ENCODE measurements at regions of chrX and their contacts with region 1.

Region 1: DNA sequence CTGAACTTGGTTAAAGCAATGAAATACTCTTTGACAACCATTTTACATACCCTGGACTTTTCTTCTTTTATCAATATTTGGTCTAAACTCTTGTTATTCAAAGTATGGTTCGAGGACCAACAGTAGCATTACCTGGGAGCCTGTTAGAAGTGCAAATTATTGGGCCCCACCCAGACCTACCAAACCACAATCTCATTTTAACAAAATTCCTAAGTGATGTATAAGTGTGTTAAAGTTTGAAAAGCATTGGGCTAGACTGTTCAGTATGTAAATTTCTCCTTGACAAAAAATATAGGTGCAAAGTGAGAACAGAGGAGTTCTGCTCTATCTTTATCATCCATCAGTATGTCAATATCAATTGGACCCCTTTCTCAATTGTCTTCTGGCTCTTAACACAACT is 67.1 kb downstream of the PGRMC1 start:
- DNase-seq: no peak
- H3K4me3 ChIP-seq: no peak overlapping the region
- H3K27ac ChIP-seq: no peak overlapping the region
- H3K4me1 ChIP-seq: no peaks in the 10 kb centered on the region
- H3K27me3 ChIP-seq: peaks cover 2% of the 10 kb centered on the region
- CTCF ChIP-seq: no peak

Region 2: DNA sequence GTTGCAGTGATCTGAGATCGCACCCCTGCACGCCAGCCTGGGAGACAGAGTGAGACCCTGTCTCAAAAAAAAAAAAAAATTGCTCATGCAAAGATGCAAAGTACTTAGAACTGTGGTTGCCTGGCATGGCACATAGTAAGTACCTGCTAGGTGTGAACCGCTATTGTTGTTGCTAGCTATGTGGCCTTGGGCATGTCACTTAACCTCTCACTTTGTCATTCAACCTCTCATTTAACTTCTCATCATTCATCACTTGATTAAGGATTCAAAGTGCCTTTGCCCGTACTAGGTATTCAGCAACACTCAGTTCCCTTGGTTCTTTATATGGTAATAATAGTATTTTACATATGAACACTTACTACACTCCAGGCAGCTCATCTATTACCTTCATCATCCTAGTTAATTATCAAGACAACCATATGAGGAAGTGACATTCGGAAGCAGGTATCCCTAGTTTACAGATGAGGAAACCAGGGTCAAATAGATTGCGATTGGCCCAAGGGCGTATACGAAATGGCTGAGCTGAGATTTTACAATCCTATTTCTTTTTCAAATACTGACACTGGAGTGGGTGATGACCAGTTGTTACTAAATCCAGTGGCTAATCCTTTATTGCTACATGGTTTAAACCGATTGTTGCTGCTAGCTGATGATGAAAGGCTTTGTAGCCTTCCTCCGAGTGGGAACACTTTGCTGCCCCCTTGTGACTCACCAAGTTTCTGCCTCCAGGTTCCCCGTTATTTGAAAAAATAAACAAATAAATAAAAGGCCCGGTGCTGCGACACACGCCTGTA is 426.5 kb after region 1 on chrX:
- CTCF ChIA-PET with region 1: no interaction called
- dilution Hi-C with region 1: no loop called
- in situ Hi-C with region 1: loop called in 1 of 2 experiments (anchors 25 kb)
- intact Hi-C with region 1: no loop called
- DNase-seq: peak; percentile 34
- H3K4me3 ChIP-seq: no peak overlapping the region
- H3K27ac ChIP-seq: no peak overlapping the region
- H3K4me1 ChIP-seq: no peaks in the 10 kb centered on the region
- H3K27me3 ChIP-seq: peaks cover 2% of the 10 kb centered on the region
- CTCF ChIP-seq: peak; percentile 32 to 57

Measured in mammary epithelial cell (primary cell).